ENCODE measurements at regions of chr12 and their contacts with region 1.

Region 1: GRCh38 chr12:9349888-9350885 is 142.0 kb upstream of the PZP start:
- DNase-seq: no peak
- H3K4me3 ChIP-seq: no peak overlapping the region
- H3K27ac ChIP-seq: no peak overlapping the region
- H3K4me1 ChIP-seq: no peaks in the 10 kb centered on the region
- H3K27me3 ChIP-seq: no peaks in the 10 kb centered on the region
- CTCF ChIP-seq: no peak
- POLR2A ChIP-seq: no peak

Region 2: DNA sequence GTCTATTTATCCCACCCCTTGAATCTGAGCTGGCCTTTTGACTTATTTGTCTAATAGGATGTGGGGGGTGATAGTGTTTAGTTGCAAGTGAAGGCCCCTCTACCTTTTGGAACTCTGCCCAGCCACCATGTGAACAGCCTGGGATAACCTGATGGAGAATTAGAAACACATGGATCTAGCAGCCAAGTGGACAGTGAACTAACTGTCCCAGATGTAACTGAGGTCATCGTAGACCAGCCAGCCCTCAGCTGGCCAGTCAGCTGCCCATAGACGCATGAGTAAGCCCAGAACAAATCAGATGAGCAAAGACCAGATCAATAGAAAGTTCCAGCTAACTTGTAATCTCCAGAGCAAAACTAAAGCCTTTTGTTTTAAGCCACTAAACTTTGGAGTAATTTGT is 238.6 kb after region 1 on chr12:
- intact Hi-C with region 1: loop called in 1 of 2 experiments (anchors 10 kb)
- DNase-seq: no peak
- H3K4me3 ChIP-seq: no peak overlapping the region
- H3K27ac ChIP-seq: no peak overlapping the region
- H3K4me1 ChIP-seq: no peaks in the 10 kb centered on the region
- H3K27me3 ChIP-seq: no peaks in the 10 kb centered on the region
- CTCF ChIP-seq: no peak
- POLR2A ChIP-seq: no peak

Measured in adrenal gland (tissue), 19 donors.